Activated CD4-positive, alpha-beta memory T cell treated with anti-CD3 and anti-CD28 coated beads for 36 hours (primary cell): ENCODE measurements at regions of chr1 and their contacts with region 1.

Region 1: DNA sequence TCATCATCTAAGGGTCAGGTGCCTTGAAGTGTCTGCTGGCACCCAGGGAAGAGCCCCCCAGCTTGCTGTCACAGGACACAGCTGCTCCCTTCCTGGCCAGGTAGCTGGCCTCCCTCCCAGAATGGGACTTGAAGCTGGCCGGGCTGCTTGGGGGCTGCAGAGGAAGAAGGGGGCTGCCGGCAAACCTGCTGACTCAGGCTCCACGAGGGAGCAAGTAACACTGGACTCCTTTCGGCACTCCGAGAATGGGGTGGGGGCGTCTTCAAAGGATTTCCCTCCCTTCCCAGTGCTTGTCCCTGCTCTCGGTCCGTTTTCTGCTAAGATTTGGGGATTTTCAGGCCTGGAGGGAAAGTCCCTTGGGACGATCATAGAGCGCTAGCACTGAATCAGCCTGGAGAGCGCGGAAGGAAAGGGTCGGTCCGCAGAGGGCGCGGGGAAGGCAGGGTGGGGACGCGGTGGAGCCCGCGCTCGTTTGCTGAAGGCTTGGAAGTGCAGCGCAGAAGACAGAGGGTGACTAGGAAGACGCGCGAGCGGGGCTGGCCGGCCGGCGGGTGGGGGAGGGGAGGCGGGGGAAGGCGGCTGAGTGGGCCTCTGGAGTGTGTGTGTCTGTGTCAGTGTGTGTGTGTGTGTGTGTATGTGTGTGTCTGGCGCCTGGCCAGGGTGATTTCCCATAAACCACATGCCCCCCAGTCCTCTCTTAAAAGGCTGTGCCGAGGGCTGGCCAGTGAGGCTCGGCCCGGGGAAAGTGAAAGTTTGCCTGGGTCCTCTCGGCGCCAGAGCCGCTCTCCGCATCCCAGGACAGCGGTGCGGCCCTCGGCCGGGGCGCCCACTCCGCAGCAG is at the start of gene CSF1:
- DNase-seq: peak; percentile 80
- H3K4me3 Mint-ChIP-seq: peak within 1 kb of the TSS; percentile 88
- H3K27ac Mint-ChIP-seq: peak within 1 kb of the TSS; percentile 89
- H3K4me1 Mint-ChIP-seq: peaks cover 72% of the 10 kb centered on the region
- H3K27me3 Mint-ChIP-seq: no peaks in the 10 kb centered on the region
- total RNA-seq, gene CSF1: 135 to 140 TPM

Region 2: GRCh38 chr1:109773146-109773899 is 137.0 kb before region 1 on chr1:
- CTCF ChIA-PET with region 1: interaction called, 26 read pairs
- POLR2A ChIA-PET with region 1: interaction called, 3 read pairs
- intact Hi-C with region 1: loop called (anchors 5 kb)
- DNase-seq: peak; percentile 83
- H3K4me3 Mint-ChIP-seq: no peak overlapping the region
- H3K27ac Mint-ChIP-seq: no peak overlapping the region
- H3K4me1 Mint-ChIP-seq: peaks cover 4% of the 10 kb centered on the region
- H3K27me3 Mint-ChIP-seq: no peaks in the 10 kb centered on the region

Region 3: DNA sequence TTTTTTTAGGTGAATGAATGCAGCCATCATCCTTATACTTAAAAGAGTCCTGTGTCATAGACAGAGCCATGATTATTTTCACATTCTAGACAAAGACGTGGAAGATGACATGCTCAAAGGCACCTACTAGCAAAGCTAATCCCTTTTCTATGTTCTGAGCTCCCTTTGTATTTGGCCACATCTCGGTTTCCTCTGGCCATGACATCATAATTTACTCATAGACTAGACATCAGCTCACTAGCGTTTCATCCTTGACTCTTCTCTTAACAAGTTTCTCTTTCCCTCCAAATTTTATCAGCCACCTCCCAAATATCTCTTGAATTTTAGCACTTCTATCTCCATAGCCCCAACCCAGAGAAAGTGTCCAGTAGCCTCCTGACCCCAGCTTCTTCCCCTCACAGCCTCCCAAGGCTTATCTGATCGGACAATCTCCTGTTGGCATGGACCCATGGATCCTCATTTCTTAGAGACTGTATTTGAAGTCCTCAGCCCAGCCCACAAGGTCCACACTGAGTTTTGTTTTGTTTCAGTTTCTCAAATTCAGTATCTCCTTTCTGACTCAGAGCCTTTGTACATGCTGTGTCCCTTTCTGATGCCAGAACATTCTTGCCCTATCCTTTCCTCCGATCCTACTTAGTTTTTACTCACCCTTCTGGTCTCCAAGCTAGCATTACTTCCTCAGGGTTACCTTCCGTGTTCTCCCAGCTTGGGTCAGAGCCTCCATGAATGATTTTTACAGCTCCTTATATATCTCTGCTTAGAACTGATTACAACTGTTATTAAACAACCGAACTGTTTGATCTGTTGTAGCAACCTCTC is 113.7 kb before region 1 on chr1:
- CTCF ChIA-PET with region 1: interaction called, 17 read pairs
- POLR2A ChIA-PET with region 1: interaction called, 17 read pairs
- intact Hi-C with region 1: loop called (anchors 1 kb)
- DNase-seq: peak; percentile 25
- H3K4me3 Mint-ChIP-seq: peak overlapping the region; percentile 9
- H3K27ac Mint-ChIP-seq: peak overlapping the region; percentile 79
- H3K4me1 Mint-ChIP-seq: peaks cover 71% of the 10 kb centered on the region
- H3K27me3 Mint-ChIP-seq: no peaks in the 10 kb centered on the region

Region 4: GRCh38 chr1:109821221-109821669 is 89.1 kb before region 1 on chr1:
- CTCF ChIA-PET with region 1: no interaction called
- POLR2A ChIA-PET with region 1: no interaction called
- intact Hi-C with region 1: loop called (anchors 1 kb)
- DNase-seq: peak; percentile 74
- H3K4me3 Mint-ChIP-seq: no peak overlapping the region
- H3K27ac Mint-ChIP-seq: no peak overlapping the region
- H3K4me1 Mint-ChIP-seq: peaks cover 40% of the 10 kb centered on the region
- H3K27me3 Mint-ChIP-seq: no peaks in the 10 kb centered on the region

Region 5: GRCh38 chr1:109895720-109896504 is 14.4 kb before region 1 on chr1:
- CTCF ChIA-PET with region 1: interaction called, 4 read pairs
- POLR2A ChIA-PET with region 1: interaction called, 6 read pairs
- intact Hi-C with region 1: loop called (anchors 1 kb)
- DNase-seq: peak; percentile 60
- H3K4me3 Mint-ChIP-seq: no peak overlapping the region
- H3K27ac Mint-ChIP-seq: peak overlapping the region; percentile 28
- H3K4me1 Mint-ChIP-seq: peaks cover 15% of the 10 kb centered on the region
- H3K27me3 Mint-ChIP-seq: peaks cover 2% of the 10 kb centered on the region

Region 6: DNA sequence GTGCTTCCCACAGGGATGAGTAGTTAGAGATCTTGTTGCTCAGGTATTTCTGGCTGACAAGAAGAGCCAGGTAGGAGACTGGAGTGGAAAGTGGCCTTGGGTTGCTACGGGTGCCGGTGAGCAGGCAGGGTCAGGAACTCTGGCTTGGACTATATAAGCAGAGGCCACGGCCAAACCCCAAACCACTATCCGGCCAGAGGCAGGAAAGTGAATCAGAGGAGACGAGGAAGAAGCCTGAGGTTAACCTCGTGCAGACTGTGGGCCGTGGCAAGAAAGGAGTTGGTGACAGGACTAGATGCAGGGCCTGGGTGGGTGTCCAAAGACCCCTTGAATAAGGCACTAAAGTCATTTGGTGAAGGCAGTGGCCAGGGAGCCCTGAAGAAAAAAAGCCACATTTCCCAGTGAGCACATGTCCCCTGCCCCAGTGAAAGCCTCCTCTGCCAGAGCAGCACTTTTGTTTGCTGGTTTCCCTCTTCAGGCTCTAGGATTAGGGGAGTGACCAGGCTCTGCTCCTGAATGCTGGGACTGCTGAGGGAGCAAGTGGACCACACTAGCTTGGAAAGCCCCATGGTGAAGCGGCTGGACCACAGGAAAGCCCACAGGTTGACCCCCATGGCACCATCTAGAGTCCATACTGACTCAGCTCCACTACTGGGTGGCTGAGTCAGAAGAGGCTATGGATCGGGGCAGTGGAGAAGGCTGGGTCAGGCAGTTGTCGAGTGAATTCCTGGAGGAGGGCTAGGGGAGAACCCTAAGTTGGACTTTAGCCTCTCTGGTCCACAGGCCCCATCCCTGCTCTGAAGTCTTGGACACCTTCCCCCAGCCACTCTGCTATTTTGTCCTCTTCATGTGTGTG is 23.7 kb after region 1 on chr1:
- CTCF ChIA-PET with region 1: no interaction called
- POLR2A ChIA-PET with region 1: no interaction called
- intact Hi-C with region 1: no loop called
- DNase-seq: peak; percentile 50
- H3K4me3 Mint-ChIP-seq: no peak overlapping the region
- H3K27ac Mint-ChIP-seq: no peak overlapping the region
- H3K4me1 Mint-ChIP-seq: peaks cover 5% of the 10 kb centered on the region
- H3K27me3 Mint-ChIP-seq: peaks cover 2% of the 10 kb centered on the region

Region 7: DNA sequence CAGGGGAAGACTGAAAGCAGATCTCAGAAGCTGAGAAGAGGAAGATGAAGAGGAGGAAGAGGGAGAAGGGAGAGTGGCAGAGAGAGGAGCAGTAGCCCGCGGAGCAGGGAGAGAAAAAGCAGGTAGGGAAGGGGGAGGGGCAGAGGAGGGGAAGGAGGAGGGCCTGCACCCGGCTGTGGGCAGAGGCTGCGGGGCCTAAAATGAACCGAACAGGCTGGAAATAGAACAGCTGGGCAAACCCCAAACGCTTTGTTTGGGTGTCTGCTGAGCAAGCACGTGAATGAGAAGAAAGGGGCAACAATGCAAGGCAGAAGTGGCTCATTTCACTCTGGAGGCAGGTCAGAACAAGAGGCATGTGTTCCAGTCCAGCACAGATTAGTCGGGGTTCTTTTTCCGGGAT is 333.2 kb after region 1 on chr1:
- CTCF ChIA-PET with region 1: no interaction called
- POLR2A ChIA-PET with region 1: no interaction called
- intact Hi-C with region 1: no loop called
- DNase-seq: peak; percentile 55
- H3K4me3 Mint-ChIP-seq: no peak overlapping the region
- H3K27ac Mint-ChIP-seq: no peak overlapping the region
- H3K4me1 Mint-ChIP-seq: peaks cover 22% of the 10 kb centered on the region
- H3K27me3 Mint-ChIP-seq: no peaks in the 10 kb centered on the region